ENCODE measurements at regions of chr7 and their contacts with region 1.

Region 1: GRCh38 chr7:35037526-35038339 is 448 bp upstream of the DPY19L1 start:
- DNase-seq: peak; percentile 96
- ATAC-seq: peak; percentile 85
- H3K4me3 ChIP-seq: peak overlapping the region; percentile 50 to 89 (median 76)
- H3K4me3 Mint-ChIP-seq: peak overlapping the region; percentile 95
- H3K27ac ChIP-seq: peak overlapping the region in 1 of 2 donors; percentile 63
- H3K27ac Mint-ChIP-seq: peak overlapping the region; percentile 89
- H3K4me1 ChIP-seq: peaks cover 15 to 18% of the 10 kb centered on the region in 2 donors
- H3K4me1 Mint-ChIP-seq: peaks cover 25% of the 10 kb centered on the region
- H3K27me3 ChIP-seq: no peaks in the 10 kb centered on the region
- H3K27me3 Mint-ChIP-seq: no peaks in the 10 kb centered on the region
- CTCF ChIP-seq: peak; percentile 87

Region 2: DNA sequence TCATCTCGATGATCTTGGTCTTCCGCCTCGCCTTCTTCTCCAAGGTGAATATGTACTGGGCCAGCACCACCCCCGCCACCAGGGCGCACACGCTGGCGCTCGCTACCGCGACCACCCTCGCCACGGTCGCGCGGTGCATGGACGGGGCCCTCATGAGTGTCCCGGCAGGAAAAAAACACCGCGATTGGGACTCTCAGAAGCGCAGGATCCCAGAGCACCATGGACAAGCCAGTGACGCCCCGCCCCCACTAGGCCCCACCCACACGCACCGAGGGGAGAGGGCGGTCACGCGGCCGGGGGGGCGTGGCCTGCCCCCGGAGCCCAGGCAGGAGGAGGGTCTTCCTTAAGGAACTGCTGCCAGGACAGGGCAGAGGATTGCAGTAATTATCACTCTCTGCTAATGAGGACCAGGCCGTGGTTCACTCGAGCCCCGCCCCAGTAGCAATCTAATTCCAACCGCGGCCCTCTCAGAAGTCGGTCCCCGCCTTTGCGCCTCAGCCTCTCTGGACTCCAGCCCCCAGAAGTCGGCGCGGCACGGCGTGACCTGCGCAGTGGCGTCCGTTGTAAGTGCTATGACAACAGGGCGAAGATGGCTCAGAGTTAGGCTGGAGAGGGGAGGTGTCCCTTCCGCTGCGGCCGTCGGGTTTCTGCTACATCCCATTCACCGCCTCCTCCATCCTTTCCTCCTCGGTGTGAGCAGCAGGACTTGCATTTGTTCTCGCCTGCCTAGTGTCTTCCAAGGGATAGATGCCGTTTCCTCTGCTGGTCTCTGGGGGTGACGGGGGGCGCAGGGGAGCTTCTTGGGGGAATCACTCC is 1908.5 kb before region 1 on chr7 and contains the start of gene BBS9:
- CTCF ChIA-PET with region 1: no interaction called
- POLR2A ChIA-PET with region 1: no interaction called
- intact Hi-C with region 1: loop called (anchors 5 kb)
- DNase-seq: peak; percentile 96
- ATAC-seq: peak; percentile 91
- H3K4me3 ChIP-seq: peak within 1 kb of the TSS; percentile 39 to 81 (median 62)
- H3K4me3 Mint-ChIP-seq: peak within 1 kb of the TSS; percentile 97
- H3K27ac ChIP-seq: peak within 1 kb of the TSS; percentile 22 to 79
- H3K27ac Mint-ChIP-seq: peak within 1 kb of the TSS; percentile 91
- H3K4me1 ChIP-seq: peaks cover 7 to 9% of the 10 kb centered on the region in 2 donors
- H3K4me1 Mint-ChIP-seq: peaks cover 24% of the 10 kb centered on the region
- H3K27me3 ChIP-seq: no peaks in the 10 kb centered on the region
- H3K27me3 Mint-ChIP-seq: no peaks in the 10 kb centered on the region
- CTCF ChIP-seq: peak; percentile 18
- total RNA-seq, gene BBS9: 45.2 and 48.4 TPM in 2 replicates

Region 3: DNA sequence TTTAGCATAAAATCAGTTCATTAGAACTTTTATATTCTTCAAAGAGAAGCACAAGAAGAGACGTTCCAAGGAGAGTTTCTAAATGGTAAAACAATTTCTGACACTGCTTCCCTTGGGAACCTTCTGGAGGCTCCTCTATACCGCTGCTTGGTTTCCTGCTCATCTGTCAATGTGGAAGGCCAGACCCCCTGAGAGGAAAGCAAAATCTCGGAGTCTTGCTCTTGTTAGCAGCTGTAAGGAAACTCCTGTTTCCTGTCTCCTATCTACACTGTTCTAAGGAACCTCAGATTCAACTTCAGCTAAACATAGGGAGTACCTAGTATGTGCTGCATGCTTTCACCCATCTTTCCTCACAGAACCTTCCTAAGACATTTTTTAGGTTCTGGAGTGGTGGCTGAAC is 810.2 kb before region 1 on chr7:
- CTCF ChIA-PET with region 1: no interaction called
- POLR2A ChIA-PET with region 1: no interaction called
- intact Hi-C with region 1: no loop called
- DNase-seq: no peak
- ATAC-seq: no peak
- H3K4me3 ChIP-seq: no peak overlapping the region
- H3K4me3 Mint-ChIP-seq: no peak overlapping the region
- H3K27ac ChIP-seq: no peak overlapping the region
- H3K27ac Mint-ChIP-seq: no peak overlapping the region
- H3K4me1 ChIP-seq: no peaks in the 10 kb centered on the region
- H3K4me1 Mint-ChIP-seq: no peaks in the 10 kb centered on the region
- H3K27me3 ChIP-seq: no peaks in the 10 kb centered on the region
- H3K27me3 Mint-ChIP-seq: no peaks in the 10 kb centered on the region
- CTCF ChIP-seq: no peak

Region 4: GRCh38 chr7:35025046-35025994 is 12.4 kb before region 1 on chr7:
- CTCF ChIA-PET with region 1: no interaction called
- POLR2A ChIA-PET with region 1: no interaction called
- intact Hi-C with region 1: no loop called
- DNase-seq: no peak
- ATAC-seq: no peak
- H3K4me3 ChIP-seq: no peak overlapping the region
- H3K4me3 Mint-ChIP-seq: no peak overlapping the region
- H3K27ac ChIP-seq: no peak overlapping the region
- H3K27ac Mint-ChIP-seq: no peak overlapping the region
- H3K4me1 ChIP-seq: no peaks in the 10 kb centered on the region
- H3K4me1 Mint-ChIP-seq: no peaks in the 10 kb centered on the region
- H3K27me3 ChIP-seq: no peaks in the 10 kb centered on the region
- H3K27me3 Mint-ChIP-seq: no peaks in the 10 kb centered on the region
- CTCF ChIP-seq: no peak

Region 5: GRCh38 chr7:35424869-35425495 is 387.2 kb after region 1 on chr7:
- CTCF ChIA-PET with region 1: no interaction called
- POLR2A ChIA-PET with region 1: no interaction called
- intact Hi-C with region 1: no loop called
- DNase-seq: peak; percentile 65
- ATAC-seq: peak; percentile 73
- H3K4me3 ChIP-seq: no peak overlapping the region
- H3K4me3 Mint-ChIP-seq: no peak overlapping the region
- H3K27ac ChIP-seq: no peak overlapping the region
- H3K27ac Mint-ChIP-seq: no peak overlapping the region
- H3K4me1 ChIP-seq: no peaks in the 10 kb centered on the region
- H3K4me1 Mint-ChIP-seq: no peaks in the 10 kb centered on the region
- H3K27me3 ChIP-seq: peaks cover 0 to 9% (median 0%) of the 10 kb centered on the region in 4 experiments
- H3K27me3 Mint-ChIP-seq: peaks cover 22% of the 10 kb centered on the region
- CTCF ChIP-seq: peak; percentile 84

Region 6: GRCh38 chr7:35694781-35695472 is 657.2 kb after region 1 on chr7 and contains the start of gene HERPUD2:
- CTCF ChIA-PET with region 1: no interaction called
- POLR2A ChIA-PET with region 1: no interaction called
- intact Hi-C with region 1: loop called (anchors 2 kb)
- DNase-seq: peak; percentile 94
- ATAC-seq: peak; percentile 91
- H3K4me3 ChIP-seq: peak within 1 kb of the TSS; percentile 78 to 98 (median 94)
- H3K4me3 Mint-ChIP-seq: peak within 1 kb of the TSS; percentile 98
- H3K27ac ChIP-seq: peak within 1 kb of the TSS; percentile 82 to 98
- H3K27ac Mint-ChIP-seq: peak within 1 kb of the TSS; percentile 97
- H3K4me1 ChIP-seq: peaks cover 40 to 44% of the 10 kb centered on the region in 2 donors
- H3K4me1 Mint-ChIP-seq: peaks cover 57% of the 10 kb centered on the region
- H3K27me3 ChIP-seq: no peaks in the 10 kb centered on the region
- H3K27me3 Mint-ChIP-seq: no peaks in the 10 kb centered on the region
- CTCF ChIP-seq: no peak
- total RNA-seq, gene HERPUD2: 54.6 and 58.8 TPM in 2 replicates